PC-3 (cell line): ENCODE measurements at regions of chr11 and their contacts with region 1.

Region 1: DNA sequence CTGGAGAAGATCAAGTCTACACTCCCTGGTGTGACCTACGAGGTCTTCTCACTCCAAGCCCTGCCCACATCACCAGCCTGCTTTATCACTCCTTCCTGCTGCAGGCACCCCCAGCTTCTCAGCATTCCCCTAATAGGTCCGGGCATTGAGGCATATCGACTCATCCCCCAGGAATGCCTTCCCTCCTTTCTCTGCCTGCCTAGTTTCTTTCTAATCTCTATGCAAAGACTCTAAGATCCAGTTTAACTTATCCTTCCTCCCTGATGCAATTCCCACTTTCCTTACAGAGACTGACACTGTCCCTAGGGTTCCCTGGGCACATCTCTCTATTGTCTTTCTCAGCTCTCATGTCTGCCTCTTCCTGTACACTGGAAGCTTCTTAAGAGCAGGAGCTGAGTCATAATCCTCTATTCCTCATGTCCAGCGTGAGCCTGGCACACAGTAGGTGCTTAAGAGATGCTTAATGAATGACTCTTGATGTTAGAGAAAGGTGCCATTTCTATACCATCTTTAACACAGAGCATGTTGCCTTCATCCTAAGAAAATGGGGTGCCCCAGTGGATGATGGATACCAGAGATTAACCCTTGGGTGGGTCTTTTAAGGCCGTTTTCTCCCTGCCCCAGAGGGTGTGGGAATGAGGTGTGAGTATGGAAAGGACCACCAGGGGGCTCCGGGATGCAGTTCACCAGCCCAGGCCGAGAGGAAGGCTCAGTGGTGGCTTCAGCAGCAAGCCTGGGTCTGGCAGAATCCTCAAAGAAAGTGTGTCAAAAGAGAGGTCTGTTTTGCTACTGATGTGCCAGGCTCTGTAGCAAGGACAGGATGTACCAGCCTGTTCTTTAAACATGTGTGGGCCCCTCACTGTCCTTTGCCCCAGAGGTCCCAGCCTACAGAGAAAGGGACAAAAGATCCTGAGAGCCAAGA is 34.7 kb downstream of the PARVA start:
- DNase-seq: peak; percentile 79
- ATAC-seq: peak; percentile 87
- H3K4me3 ChIP-seq: no peak overlapping the region
- H3K27ac ChIP-seq: peak overlapping the region; percentile 6
- H3K4me1 ChIP-seq: peaks cover 14% of the 10 kb centered on the region
- H3K27me3 ChIP-seq: no peaks in the 10 kb centered on the region
- CTCF ChIP-seq: peak; percentile 84

Region 2: GRCh38 chr11:12485328-12485727 is 73.3 kb after region 1 on chr11:
- CTCF ChIA-PET with region 1: interaction called, 3 read pairs
- POLR2A ChIA-PET with region 1: no interaction called
- intact Hi-C with region 1: loop called (anchors 2 kb)
- DNase-seq: peak; percentile 31
- ATAC-seq: 0 out of 2 replicates have a peak, but pooled peaks have one; percentile 22
- H3K4me3 ChIP-seq: no peak overlapping the region
- H3K27ac ChIP-seq: no peak overlapping the region
- H3K4me1 ChIP-seq: no peaks in the 10 kb centered on the region
- H3K27me3 ChIP-seq: no peaks in the 10 kb centered on the region
- CTCF ChIP-seq: peak; percentile 69